ENCODE measurements at regions of chr22 and their contacts with region 1.

Region 1: DNA sequence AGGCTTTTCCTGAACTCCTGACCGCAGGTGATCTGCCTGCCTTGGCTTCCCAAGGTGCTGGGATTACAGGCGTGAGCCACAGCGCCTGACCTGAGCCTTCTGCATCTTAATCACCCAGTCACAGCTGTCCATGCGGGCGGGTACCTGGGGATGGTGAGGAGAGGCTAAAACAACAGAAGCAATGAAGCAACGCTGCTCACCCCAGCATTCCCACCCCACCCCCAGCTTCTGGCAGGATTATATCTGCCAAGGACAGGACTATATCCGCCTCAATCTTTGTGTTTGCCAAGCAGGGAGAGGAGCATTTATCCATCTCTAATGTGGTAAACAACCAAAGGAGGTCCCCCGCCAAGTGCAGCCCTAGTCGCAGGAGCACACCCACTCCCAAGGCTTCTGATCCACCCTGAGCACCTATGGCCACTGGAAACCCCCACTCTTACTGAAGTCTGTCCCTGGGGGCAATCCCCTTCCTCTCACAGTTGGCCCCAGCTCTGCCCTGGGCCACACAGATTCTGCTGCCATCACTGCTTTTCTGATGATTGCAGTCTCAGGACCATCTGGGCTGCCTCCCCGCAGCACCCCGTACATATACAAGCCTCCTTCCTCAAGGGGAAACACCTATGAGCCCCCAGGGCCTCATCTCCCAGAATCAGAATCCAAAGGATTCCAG is 8.8 kb upstream of the LGALS2 start:
- DNase-seq: no peak
- H3K4me3 Mint-ChIP-seq: no peak overlapping the region
- H3K27ac Mint-ChIP-seq: no peak overlapping the region
- H3K4me1 Mint-ChIP-seq: peaks cover 13% of the 10 kb centered on the region
- H3K27me3 Mint-ChIP-seq: peaks cover 61% of the 10 kb centered on the region

Region 2: DNA sequence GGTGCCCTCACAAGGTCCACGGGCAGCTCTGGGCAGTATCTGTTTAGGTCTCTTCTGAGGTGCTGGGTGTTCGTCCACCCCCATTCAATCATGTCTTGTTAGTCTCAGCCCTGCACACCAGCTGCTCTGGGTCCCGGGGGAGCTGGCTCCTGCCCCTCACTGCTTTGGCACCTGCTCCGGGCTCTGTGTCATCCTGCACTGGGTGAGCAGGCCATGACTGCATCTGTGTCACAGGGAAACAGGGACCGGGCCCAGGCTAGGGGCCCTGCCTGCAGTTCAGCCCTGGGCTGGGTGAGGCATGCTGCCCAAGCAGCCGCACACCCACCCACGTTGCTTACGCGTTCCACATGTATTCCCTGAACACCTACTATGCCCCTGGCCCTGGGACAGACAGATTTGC is 205.3 kb before region 1 on chr22:
- CTCF ChIA-PET with region 1: no interaction called
- DNase-seq: no peak
- H3K4me3 Mint-ChIP-seq: no peak overlapping the region
- H3K27ac Mint-ChIP-seq: no peak overlapping the region
- H3K4me1 Mint-ChIP-seq: no peaks in the 10 kb centered on the region
- H3K27me3 Mint-ChIP-seq: peaks cover 64% of the 10 kb centered on the region

Region 3: GRCh38 chr22:37538590-37539357 is 49.9 kb before region 1 on chr22:
- CTCF ChIA-PET with region 1: interaction called, 95 read pairs
- DNase-seq: peak; percentile 93
- H3K4me3 Mint-ChIP-seq: no peak overlapping the region
- H3K27ac Mint-ChIP-seq: no peak overlapping the region
- H3K4me1 Mint-ChIP-seq: peaks cover 41% of the 10 kb centered on the region
- H3K27me3 Mint-ChIP-seq: peaks cover 67% of the 10 kb centered on the region

Region 4: GRCh38 chr22:37561212-37562048 is 27.3 kb before region 1 on chr22:
- CTCF ChIA-PET with region 1: interaction called, 34 read pairs
- DNase-seq: peak; percentile 81
- H3K4me3 Mint-ChIP-seq: no peak overlapping the region
- H3K27ac Mint-ChIP-seq: no peak overlapping the region
- H3K4me1 Mint-ChIP-seq: peaks cover 25% of the 10 kb centered on the region
- H3K27me3 Mint-ChIP-seq: peaks cover 97% of the 10 kb centered on the region

Region 5: DNA sequence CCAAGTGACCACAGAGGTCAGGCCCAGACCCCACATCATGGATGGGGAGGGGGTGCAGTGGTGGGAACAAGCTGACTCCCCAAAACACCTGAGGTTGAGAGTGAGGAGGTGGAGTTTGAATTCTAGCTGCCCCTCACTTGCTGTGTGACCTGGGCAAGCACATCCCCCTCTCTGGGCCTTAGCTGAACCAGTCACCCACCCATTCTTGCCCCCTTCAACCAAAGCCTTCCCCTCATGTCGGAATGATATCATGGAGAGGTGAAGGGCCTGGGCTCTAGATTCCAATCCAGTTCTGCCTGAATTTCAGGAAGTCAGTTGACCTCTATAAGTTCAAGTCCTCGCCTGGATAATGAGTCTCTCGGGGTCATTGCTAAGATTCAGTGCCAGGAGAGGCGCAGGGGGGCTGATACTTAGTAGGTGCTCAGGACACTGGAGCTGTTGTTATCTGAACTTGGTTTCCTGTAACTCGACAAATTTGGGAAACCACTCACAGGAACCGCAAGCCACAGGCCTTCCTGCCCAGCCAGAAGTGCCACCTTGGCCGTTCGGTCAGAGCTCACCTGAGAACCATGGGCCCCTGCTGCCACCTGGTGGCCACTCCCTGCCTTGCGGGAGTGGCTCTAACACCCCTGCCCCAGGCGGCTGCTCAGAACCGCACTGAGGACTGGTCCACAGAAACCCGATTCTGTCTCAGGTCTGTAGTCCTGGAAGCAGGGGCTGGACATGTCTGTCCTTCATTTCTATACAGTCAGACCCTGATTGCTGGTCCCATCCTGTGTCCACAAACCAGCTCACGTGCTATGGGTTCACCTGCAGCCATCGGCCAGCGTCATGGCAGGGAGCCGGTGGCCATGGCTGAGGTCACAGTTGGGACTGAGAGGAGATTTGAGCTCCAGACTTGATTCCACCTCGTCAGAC is 21.5 kb before region 1 on chr22:
- CTCF ChIA-PET with region 1: interaction called, 34 read pairs
- DNase-seq: peak; percentile 95
- H3K4me3 Mint-ChIP-seq: peak overlapping the region; percentile 38
- H3K27ac Mint-ChIP-seq: peak overlapping the region; percentile 81
- H3K4me1 Mint-ChIP-seq: peaks cover 23% of the 10 kb centered on the region
- H3K27me3 Mint-ChIP-seq: peaks cover 100% of the 10 kb centered on the region

Measured in activated naive CD4-positive, alpha-beta T cell treated with anti-CD3 and anti-CD28 coated beads, Interleukin-2, amount 10 ng/mL, durations not matched to agents 7 days and 5 days (primary cell).